Esophagus muscularis mucosa (tissue), 4 donors: ENCODE measurements at regions of chr2 and their contacts with region 1.

Region 1: DNA sequence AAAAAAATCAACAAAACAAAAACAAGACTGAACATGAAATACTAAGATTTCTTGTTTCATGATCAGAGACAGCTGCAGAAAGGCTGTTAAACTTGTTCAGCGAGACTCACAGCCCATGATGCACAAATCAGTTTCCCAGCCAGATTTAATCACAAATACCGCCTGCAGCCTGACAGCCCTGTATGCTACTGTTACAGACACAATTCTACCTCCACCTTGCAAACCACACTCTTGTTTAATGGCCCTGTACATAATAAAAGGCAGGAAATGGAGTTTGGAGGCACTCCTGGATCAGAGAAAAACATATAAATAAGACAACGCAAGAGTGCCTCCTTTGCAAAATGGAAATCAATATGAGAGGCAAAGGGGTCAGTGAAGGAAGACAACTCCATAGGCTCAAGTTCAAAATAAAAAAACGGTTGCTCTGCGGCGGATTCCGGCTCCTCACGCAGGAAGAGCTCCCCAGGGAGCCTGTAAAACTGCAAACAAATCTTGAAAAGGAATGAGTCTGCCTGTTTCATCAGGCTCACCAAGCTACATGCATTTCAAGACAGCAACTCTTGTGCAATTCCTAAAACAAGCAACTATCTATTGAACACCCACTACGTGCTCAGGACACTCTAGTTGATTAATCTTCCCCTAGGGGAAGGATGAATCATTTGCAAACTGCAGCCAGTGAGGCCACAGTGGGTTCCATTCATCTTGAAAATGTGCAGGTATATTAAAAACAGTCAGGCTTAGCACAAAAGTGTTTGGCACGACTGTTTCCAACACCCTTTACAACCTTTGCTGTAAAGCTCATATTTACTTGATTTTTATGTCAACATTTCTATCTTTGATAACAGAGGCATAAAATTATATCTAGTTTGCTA is 37.5 kb downstream of the TBC1D8 start:
- DNase-seq: no peak
- H3K4me3 ChIP-seq: no peak overlapping the region
- H3K27ac ChIP-seq: peak overlapping the region in 1 of 4 donors; percentile 23
- H3K4me1 ChIP-seq: peaks cover 69 to 83% (median 82%) of the 10 kb centered on the region in 4 donors
- H3K27me3 ChIP-seq: no peaks in the 10 kb centered on the region
- CTCF ChIP-seq: no peak
- EP300 ChIP-seq: no peak
- POLR2A ChIP-seq: no peak

Region 2: DNA sequence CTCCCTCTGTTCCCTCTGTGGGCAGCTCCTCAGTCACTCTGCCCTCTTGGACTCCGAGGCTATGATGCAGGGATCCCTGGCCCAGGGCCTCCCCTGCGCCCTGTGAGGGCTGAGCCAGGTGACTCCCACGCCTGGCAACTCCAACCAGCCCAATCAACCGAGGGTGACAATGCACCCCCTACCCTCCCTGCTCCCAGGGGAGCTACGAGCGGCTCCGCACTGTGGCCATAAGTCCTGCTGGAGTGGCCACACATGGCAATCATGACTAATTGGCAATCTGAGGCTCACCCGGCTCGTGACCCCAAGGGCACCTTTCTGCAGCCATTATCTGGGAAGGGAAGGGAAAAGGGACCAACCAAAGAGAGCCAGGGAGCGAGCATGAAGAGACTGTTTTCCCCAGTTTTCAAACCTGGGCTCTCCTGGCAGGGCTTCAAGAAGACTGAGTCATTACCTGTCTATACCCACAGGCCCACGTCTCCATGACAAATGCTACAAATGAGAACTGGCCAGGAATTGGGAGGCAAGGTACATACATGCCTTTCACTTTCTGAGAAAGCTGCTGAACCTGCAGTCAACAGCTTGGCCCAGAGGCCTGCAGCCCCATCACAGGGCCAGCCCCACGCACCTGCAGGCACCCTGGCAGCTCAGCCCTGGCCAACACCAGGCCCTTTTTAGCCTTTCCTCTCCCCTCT is 66.4 kb before region 1 on chr2:
- intact Hi-C with region 1: loop called (anchors 10 kb)
- DNase-seq: no peak
- H3K4me3 ChIP-seq: no peak overlapping the region
- H3K27ac ChIP-seq: no peak overlapping the region
- H3K4me1 ChIP-seq: peaks cover 9 to 14% (median 11%) of the 10 kb centered on the region in 4 donors
- H3K27me3 ChIP-seq: no peaks in the 10 kb centered on the region
- CTCF ChIP-seq: no peak
- EP300 ChIP-seq: no peak
- POLR2A ChIP-seq: no peak

Region 3: DNA sequence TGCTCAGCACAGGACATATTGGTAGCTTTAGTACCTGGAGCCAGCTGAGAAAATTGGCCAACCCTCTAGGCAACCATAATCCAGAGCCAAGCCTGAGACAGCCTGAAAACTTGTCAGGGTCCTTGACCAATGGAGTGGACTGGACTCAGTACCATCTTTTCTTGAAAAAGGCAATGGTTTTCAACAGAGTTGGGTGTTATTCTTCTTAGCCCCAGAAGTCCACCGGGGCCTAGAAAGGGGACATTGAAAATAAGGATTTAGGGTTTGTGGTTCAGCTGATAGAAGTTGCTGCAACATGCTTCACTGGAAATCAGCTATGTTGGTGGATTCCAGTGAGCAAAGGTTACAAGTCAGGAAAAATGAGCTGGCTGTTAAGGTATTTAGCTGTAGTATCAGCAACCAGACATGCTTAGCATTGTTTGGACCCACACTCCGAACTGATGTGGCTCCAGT is 116.9 kb after region 1 on chr2:
- intact Hi-C with region 1: no loop called
- DNase-seq: no peak
- H3K4me3 ChIP-seq: no peak overlapping the region
- H3K27ac ChIP-seq: no peak overlapping the region
- H3K4me1 ChIP-seq: no peaks in the 10 kb centered on the region
- H3K27me3 ChIP-seq: no peaks in the 10 kb centered on the region
- CTCF ChIP-seq: no peak
- EP300 ChIP-seq: no peak
- POLR2A ChIP-seq: no peak